Endothelial cell of umbilical vein (primary cell): ENCODE measurements at regions of chr1 and their contacts with region 1.

Region 1: GRCh38 chr1:27430903-27431600 is 38.6 kb downstream of the GPR3 start:
- DNase-seq: peak; percentile 77
- H3K4me3 ChIP-seq: no peak overlapping the region
- H3K27ac ChIP-seq: peak overlapping the region; percentile 92
- H3K4me1 ChIP-seq: peaks cover 55% of the 10 kb centered on the region
- H3K27me3 ChIP-seq: no peaks in the 10 kb centered on the region
- CTCF ChIP-seq: no peak
- POLR2A ChIP-seq: no peak

Region 2: GRCh38 chr1:27154991-27155781 is 275.9 kb before region 1 on chr1 and contains the start of gene SLC9A1:
- CTCF ChIA-PET with region 1: no interaction called
- POLR2A ChIA-PET with region 1: no interaction called
- dilution Hi-C with region 1: no loop called
- intact Hi-C with region 1: no loop called
- DNase-seq: peak; percentile 95
- H3K4me3 ChIP-seq: peak within 1 kb of the TSS; percentile 33 to 68 (median 48)
- H3K27ac ChIP-seq: peak within 1 kb of the TSS; percentile 74
- H3K4me1 ChIP-seq: peaks cover 38% of the 10 kb centered on the region
- H3K27me3 ChIP-seq: no peaks in the 10 kb centered on the region
- CTCF ChIP-seq: peak; percentile 87 to 95
- POLR2A ChIP-seq: peak; percentile 100
- total RNA-seq, gene SLC9A1: 59.2 and 60.5 TPM in 2 replicates

Region 3: DNA sequence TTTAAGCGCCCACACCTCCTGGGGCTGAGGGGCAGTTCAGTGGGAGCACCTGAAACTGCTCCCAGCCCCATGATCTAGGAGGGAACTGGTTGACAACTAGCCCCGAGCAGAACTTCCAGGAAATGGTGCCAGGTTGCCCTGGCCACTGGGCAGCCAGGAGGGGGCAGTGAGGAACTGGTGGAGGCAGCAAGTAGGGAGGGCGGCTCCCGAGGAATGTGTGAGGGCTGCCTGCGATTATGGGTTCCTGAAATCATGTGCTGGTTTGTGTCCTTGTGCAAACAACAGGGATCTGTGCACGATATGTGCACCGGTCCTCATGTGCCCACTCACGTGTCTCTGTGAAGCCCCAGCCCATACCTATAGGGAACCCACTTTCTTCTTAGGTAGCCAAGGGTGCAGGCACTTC is 28.7 kb before region 1 on chr1:
- CTCF ChIA-PET with region 1: interaction called, 3 read pairs
- POLR2A ChIA-PET with region 1: no interaction called
- dilution Hi-C with region 1: no loop called
- intact Hi-C with region 1: loop called (anchors 2 kb)
- DNase-seq: peak; percentile 74
- H3K4me3 ChIP-seq: no peak overlapping the region
- H3K27ac ChIP-seq: no peak overlapping the region
- H3K4me1 ChIP-seq: peaks cover 4% of the 10 kb centered on the region
- H3K27me3 ChIP-seq: no peaks in the 10 kb centered on the region
- CTCF ChIP-seq: peak; percentile 57 to 81
- POLR2A ChIP-seq: no peak

Region 4: DNA sequence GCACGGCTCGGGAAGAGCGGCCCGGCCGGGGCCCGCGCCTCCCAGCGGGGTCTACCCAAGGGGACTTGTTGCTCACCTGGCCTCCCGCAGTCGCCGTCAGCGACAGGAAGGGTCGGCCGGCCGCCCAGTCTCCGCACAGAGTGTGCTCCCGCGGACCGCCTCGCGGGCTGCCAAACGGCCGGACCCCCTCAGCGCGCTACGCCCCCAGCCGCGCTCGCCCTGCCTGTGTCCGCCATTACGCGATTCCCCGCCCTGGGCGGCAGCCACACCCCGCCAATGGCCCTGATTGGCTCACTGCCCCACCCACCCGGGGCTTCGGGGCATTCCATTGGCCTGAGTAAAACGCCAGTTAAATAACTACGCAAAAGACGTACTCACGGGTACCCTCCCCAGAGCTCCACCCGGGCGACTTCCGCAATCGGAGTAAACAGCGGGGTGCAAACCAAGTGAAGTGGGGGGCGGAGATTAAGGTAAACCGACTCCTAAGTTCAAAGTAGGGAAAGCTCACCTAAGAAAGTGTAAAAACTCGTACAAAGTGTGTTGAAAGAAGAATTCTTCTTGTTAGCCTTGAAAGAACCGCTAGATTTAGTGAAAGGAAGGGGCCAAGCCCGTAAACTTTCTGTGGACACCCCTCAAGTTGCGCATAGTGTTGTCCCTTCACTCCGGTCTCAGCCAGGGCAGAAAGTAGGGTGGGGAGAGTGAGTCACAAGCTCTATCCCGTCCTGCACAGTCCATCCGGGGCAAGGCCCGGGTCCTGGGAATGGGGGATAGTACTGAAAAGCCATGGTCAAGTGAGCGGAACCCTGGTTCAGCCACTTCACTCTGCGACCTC is 59.1 kb after region 1 on chr1 and contains the start of gene WASF2:
- CTCF ChIA-PET with region 1: interaction called, 13 read pairs
- POLR2A ChIA-PET with region 1: no interaction called
- dilution Hi-C with region 1: no loop called
- intact Hi-C with region 1: loop called (anchors 1 kb)
- DNase-seq: peak; percentile 98
- H3K4me3 ChIP-seq: peak within 1 kb of the TSS; percentile 42 to 83 (median 80)
- H3K27ac ChIP-seq: peak within 1 kb of the TSS; percentile 95
- H3K4me1 ChIP-seq: peaks cover 14% of the 10 kb centered on the region
- H3K27me3 ChIP-seq: no peaks in the 10 kb centered on the region
- CTCF ChIP-seq: no peak
- POLR2A ChIP-seq: peak; percentile 74
- total RNA-seq, gene WASF2: 169 and 172 TPM in 2 replicates

Region 5: DNA sequence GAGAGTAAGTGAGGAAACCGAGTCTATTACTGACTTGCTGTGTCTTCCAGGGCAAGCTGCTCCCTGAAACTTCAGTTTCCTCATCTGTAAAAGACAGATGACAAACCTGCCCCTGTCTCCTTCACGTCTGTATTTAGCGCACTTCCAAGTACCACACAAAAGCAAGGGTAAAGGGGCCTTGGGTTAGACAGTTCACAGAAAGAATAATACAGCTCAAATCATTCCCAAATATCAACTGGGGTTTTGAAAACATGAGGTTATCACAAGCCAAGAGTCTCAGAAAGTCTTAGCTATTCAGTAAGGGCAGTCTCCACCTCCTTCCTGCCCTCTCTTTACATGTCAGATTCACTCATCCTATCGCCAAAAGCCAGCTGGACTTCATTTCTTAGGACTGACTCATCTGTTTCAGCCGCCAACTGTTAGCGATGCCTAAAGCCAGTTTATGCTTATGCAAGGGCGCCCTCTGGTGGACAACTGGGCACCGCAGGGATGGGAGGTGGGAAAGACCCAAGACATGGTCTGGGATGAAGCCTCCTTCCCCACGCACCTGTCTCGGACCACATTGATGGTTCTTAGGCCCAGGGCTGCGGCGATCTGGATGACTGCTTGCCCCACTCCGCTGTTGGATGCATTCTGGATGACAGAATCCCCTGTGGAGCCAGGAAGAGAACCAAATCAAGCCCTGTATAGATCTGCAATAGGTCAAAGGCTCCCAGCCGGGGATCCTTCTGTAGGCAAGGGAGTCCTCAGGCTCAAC is 1771.7 kb after region 1 on chr1:
- CTCF ChIA-PET with region 1: no interaction called
- POLR2A ChIA-PET with region 1: no interaction called
- dilution Hi-C with region 1: no loop called
- intact Hi-C with region 1: no loop called
- DNase-seq: peak; percentile 96
- H3K4me3 ChIP-seq: no peak overlapping the region
- H3K27ac ChIP-seq: peak overlapping the region; percentile 63
- H3K4me1 ChIP-seq: peaks cover 10% of the 10 kb centered on the region
- H3K27me3 ChIP-seq: no peaks in the 10 kb centered on the region
- CTCF ChIP-seq: peak; percentile 89 to 97
- POLR2A ChIP-seq: no peak